MCF 10A (cell line): ENCODE measurements at regions of chr20 and their contacts with region 1.

Region 1: GRCh38 chr20:36199345-36200257 is 36.7 kb upstream of the AAR2 start:
- DNase-seq: peak; percentile 78
- H3K4me3 Mint-ChIP-seq: no peak overlapping the region
- H3K27ac Mint-ChIP-seq: no peak overlapping the region
- H3K4me1 Mint-ChIP-seq: no peaks in the 10 kb centered on the region
- H3K27me3 Mint-ChIP-seq: no peaks in the 10 kb centered on the region
- CTCF ChIP-seq: peak; percentile 84

Region 2: GRCh38 chr20:36153736-36154699 is 45.6 kb before region 1 on chr20:
- CTCF ChIA-PET with region 1: interaction called, 116 read pairs
- POLR2A ChIA-PET with region 1: interaction called, 3 read pairs
- intact Hi-C with region 1: loop called (anchors 1 kb)
- DNase-seq: peak; percentile 70
- H3K4me3 Mint-ChIP-seq: peak overlapping the region; percentile 58
- H3K27ac Mint-ChIP-seq: no peak overlapping the region
- H3K4me1 Mint-ChIP-seq: no peaks in the 10 kb centered on the region
- H3K27me3 Mint-ChIP-seq: no peaks in the 10 kb centered on the region
- CTCF ChIP-seq: no peak

Region 3: GRCh38 chr20:36181934-36182603 is 17.5 kb before region 1 on chr20:
- CTCF ChIA-PET with region 1: interaction called, 102 read pairs
- POLR2A ChIA-PET with region 1: interaction called, 3 read pairs
- intact Hi-C with region 1: no loop called
- DNase-seq: peak; percentile 7
- H3K4me3 Mint-ChIP-seq: no peak overlapping the region
- H3K27ac Mint-ChIP-seq: no peak overlapping the region
- H3K4me1 Mint-ChIP-seq: no peaks in the 10 kb centered on the region
- H3K27me3 Mint-ChIP-seq: no peaks in the 10 kb centered on the region
- CTCF ChIP-seq: no peak

Region 4: GRCh38 chr20:36585463-36586108 is 386.0 kb after region 1 on chr20:
- CTCF ChIA-PET with region 1: interaction called, 12 read pairs
- POLR2A ChIA-PET with region 1: no interaction called
- intact Hi-C with region 1: no loop called
- DNase-seq: peak; percentile 80
- H3K4me3 Mint-ChIP-seq: no peak overlapping the region
- H3K27ac Mint-ChIP-seq: no peak overlapping the region
- H3K4me1 Mint-ChIP-seq: peaks cover 7% of the 10 kb centered on the region
- H3K27me3 Mint-ChIP-seq: no peaks in the 10 kb centered on the region
- CTCF ChIP-seq: no peak